ENCODE measurements at regions of chr20 and their contacts with region 1.

Region 1: GRCh38 chr20:53379014-53379832 is 214.4 kb downstream of the ZNF217 start:
- DNase-seq: no peak
- ATAC-seq: no peak
- H3K4me3 ChIP-seq: no peak overlapping the region
- H3K27ac ChIP-seq: no peak overlapping the region
- H3K4me1 ChIP-seq: peaks cover 0 to 4% of the 10 kb centered on the region in 2 donors
- H3K27me3 ChIP-seq: no peaks in the 10 kb centered on the region
- CTCF ChIP-seq: no peak
- POLR2A ChIP-seq: no peak

Region 2: GRCh38 chr20:53287357-53288042 is 91.7 kb before region 1 on chr20:
- in situ Hi-C with region 1: no loop called
- intact Hi-C with region 1: loop called (anchors 10 kb)
- DNase-seq: no peak
- ATAC-seq: no peak
- H3K4me3 ChIP-seq: no peak overlapping the region
- H3K27ac ChIP-seq: no peak overlapping the region
- H3K4me1 ChIP-seq: no peaks in the 10 kb centered on the region
- H3K27me3 ChIP-seq: no peaks in the 10 kb centered on the region
- CTCF ChIP-seq: no peak
- POLR2A ChIP-seq: no peak